MCF 10A (cell line): ENCODE measurements at regions of chr7 and their contacts with region 1.

Region 1: GRCh38 chr7:48182718-48183369 is 11.6 kb downstream of the ABCA13 start:
- DNase-seq: peak; percentile 25
- H3K4me3 Mint-ChIP-seq: no peak overlapping the region
- H3K27ac Mint-ChIP-seq: peak overlapping the region; percentile 52
- H3K4me1 Mint-ChIP-seq: peaks cover 17% of the 10 kb centered on the region
- H3K27me3 Mint-ChIP-seq: peaks cover 5% of the 10 kb centered on the region
- CTCF ChIP-seq: no peak

Region 2: DNA sequence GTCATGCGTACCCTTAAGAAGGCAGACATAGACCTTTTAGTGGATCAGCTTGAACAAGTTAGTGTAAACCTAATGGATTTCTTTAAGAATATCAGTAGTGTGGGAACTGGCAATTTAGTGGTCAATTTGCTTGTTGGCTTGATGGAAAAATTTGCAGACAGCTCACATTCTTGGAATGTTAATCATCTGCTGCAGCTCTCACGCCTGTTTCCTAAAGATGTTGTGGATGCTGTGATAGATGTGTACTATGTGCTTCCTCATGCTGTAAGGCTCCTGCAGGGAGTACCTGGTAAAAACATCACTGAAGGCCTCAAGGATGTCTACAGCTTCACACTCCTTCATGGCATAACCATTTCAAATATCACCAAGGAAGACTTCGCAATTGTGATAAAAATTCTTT is 91.8 kb after region 1 on chr7:
- CTCF ChIA-PET with region 1: no interaction called
- POLR2A ChIA-PET with region 1: no interaction called
- intact Hi-C with region 1: loop called (anchors 5 kb)
- DNase-seq: no peak
- H3K4me3 Mint-ChIP-seq: no peak overlapping the region
- H3K27ac Mint-ChIP-seq: no peak overlapping the region
- H3K4me1 Mint-ChIP-seq: no peaks in the 10 kb centered on the region
- H3K27me3 Mint-ChIP-seq: peaks cover 17% of the 10 kb centered on the region
- CTCF ChIP-seq: no peak